Adrenal gland (tissue), 19 donors: ENCODE measurements at regions of chr17 and their contacts with region 1.

Region 1: DNA sequence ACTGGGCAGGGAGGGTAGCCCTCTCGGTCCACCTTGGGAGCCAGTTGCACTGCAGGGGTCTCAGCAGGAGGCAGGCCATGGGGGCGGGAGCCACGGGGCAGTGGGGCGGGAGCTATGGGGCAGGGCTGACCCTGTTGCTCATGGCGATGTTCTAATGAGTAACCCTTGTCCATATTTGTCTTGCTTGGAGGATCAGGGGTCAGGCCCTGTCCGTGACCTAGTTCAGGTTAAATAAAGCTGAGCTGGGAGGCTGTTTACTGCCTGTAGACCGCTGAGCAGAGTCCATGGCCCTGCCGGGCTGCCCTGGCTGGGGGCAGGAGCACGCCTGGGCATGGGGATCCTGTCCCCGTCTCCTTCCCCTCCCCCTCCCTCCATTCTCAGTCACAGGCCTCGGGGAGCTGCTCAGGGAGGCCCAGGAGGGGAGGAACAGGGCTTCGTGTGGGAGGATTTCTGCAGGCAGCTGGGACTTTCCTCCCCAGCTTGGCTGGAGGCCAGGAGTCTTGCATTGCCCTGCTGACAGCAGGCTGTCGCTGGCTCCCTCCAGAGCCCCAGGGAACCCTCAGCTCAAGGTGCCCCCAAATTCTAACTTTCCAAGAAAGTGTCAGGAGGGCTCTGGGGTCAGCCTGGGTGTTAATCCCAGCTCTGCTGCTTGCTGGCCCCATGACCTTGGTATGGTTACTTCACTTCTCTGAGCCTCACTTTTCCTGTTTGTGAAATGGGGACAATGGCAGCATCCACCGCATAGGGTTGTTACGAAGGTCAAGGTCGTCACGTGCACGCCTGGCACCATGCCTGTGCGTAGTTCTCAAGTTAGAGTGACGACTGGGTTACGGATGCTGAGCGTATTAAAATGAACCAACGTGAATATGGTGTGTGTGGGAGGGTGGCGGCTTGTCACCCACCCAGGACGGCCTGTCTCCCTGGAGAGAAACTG is 6.1 kb upstream of the SERPINF2 start:
- DNase-seq: peak; percentile 68 to 87 (median 85)
- H3K4me3 ChIP-seq: no peak overlapping the region
- H3K27ac ChIP-seq: peak overlapping the region in 3 of 5 donors; percentile 36 to 83 (median 79)
- H3K4me1 ChIP-seq: peaks cover 15 to 17% of the 10 kb centered on the region in 2 donors
- H3K27me3 ChIP-seq: no peaks in the 10 kb centered on the region
- CTCF ChIP-seq: no peak
- POLR2A ChIP-seq: no peak

Region 2: GRCh38 chr17:1847191-1847590 is 110.6 kb after region 1 on chr17:
- intact Hi-C with region 1: loop called in 1 of 2 experiments (anchors 10 kb)
- DNase-seq: no peak
- H3K4me3 ChIP-seq: no peak overlapping the region
- H3K27ac ChIP-seq: no peak overlapping the region
- H3K4me1 ChIP-seq: no peaks in the 10 kb centered on the region
- H3K27me3 ChIP-seq: no peaks in the 10 kb centered on the region
- CTCF ChIP-seq: no peak
- POLR2A ChIP-seq: no peak

Region 3: GRCh38 chr17:1865252-1866037 is 128.8 kb after region 1 on chr17:
- intact Hi-C with region 1: loop called in 1 of 2 experiments (anchors 10 kb)
- DNase-seq: peak; percentile 36 to 64 (median 47)
- H3K4me3 ChIP-seq: no peak overlapping the region
- H3K27ac ChIP-seq: peak overlapping the region in 1 of 5 donors; percentile 48
- H3K4me1 ChIP-seq: no peaks in the 10 kb centered on the region
- H3K27me3 ChIP-seq: no peaks in the 10 kb centered on the region
- CTCF ChIP-seq: peak; percentile 45 to 69 (median 54)
- POLR2A ChIP-seq: no peak